Heart left ventricle (tissue), 16 donors: ENCODE measurements at regions of chr6 and their contacts with region 1.

Region 1: DNA sequence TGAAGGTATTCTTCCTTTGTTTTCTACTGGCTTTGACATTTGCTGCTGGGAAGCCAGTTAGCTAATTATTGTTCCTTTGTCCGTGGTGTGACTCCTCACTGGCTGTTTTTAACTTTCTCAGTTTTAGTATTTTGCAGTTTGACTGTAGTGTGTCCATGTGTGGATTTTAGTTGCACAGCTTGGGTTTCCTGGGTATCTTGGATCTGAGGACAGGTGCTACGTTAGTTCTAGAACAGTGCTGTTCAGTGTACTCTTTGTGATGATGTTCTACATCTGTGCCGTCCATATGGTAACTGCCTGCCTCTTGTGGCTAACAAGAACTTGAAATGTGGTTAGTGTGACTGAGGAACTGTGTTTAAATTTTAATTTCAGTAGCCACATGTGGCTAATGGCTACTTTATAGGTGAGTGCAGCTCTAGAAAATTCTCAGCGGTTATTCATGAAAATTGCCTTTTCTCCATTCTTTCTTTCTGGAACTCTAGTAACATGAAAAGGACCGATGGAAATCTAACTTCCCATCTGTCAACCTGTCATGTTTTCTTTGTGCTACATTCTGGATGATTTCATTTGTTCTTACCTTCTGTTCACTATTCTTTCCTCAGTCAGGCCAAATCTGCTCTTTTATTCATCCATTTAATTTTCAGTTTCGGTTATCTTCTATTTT is 7.4 kb downstream of the SNX9 start:
- DNase-seq: no peak
- ATAC-seq: no peak
- H3K4me3 ChIP-seq: no peak overlapping the region
- H3K27ac ChIP-seq: no peak overlapping the region
- H3K4me1 ChIP-seq: peaks cover 0 to 72% (median 40%) of the 10 kb centered on the region in 12 donors
- H3K27me3 ChIP-seq: no peaks in the 10 kb centered on the region
- CTCF ChIP-seq: no peak
- POLR2A ChIP-seq: no peak

Region 2: DNA sequence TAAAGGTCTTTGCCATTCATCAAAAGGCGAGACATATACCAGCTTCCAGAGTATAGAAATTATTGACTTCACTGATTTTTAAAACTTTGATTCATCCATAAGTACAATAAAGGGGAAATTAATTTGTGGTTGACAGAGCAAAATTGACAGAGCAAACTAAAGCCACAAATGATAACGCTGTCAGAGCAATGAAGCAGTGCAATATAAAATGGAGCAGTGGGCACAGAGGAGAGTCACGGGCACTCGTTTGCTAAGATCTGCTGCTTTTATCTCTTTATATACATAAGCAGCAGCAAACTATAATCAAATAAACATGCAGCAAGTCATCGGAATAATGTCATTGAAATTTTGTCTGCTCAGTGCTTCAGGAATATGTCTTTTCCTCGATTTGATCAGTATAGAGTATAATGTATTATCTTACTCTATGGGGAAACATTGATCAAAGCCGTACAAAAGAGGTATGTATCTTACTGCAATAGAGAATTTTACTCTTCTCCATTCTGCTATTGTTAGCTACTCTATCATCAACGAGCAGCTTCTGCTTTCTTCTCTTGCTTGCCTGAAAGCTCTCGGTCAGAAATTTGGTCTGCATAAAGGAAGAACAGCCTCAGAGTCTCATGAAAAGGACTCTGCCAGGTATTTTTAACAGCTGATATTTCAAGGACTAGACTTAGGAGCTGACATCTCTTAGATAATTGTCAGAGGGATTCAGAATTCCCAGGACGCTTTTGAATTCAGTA is 1599.3 kb before region 1 on chr6:
- intact Hi-C with region 1: no loop called
- DNase-seq: no peak
- ATAC-seq: no peak
- H3K4me3 ChIP-seq: no peak overlapping the region
- H3K27ac ChIP-seq: no peak overlapping the region
- H3K4me1 ChIP-seq: no peaks in the 10 kb centered on the region
- H3K27me3 ChIP-seq: no peaks in the 10 kb centered on the region
- CTCF ChIP-seq: no peak
- POLR2A ChIP-seq: no peak

Region 3: GRCh38 chr6:157203312-157203744 is 627.2 kb before region 1 on chr6:
- intact Hi-C with region 1: no loop called
- DNase-seq: no peak
- ATAC-seq: no peak
- H3K4me3 ChIP-seq: no peak overlapping the region
- H3K27ac ChIP-seq: no peak overlapping the region
- H3K4me1 ChIP-seq: peaks cover 0 to 10% (median 5%) of the 10 kb centered on the region in 12 donors
- H3K27me3 ChIP-seq: no peaks in the 10 kb centered on the region
- CTCF ChIP-seq: no peak
- POLR2A ChIP-seq: no peak

Region 4: DNA sequence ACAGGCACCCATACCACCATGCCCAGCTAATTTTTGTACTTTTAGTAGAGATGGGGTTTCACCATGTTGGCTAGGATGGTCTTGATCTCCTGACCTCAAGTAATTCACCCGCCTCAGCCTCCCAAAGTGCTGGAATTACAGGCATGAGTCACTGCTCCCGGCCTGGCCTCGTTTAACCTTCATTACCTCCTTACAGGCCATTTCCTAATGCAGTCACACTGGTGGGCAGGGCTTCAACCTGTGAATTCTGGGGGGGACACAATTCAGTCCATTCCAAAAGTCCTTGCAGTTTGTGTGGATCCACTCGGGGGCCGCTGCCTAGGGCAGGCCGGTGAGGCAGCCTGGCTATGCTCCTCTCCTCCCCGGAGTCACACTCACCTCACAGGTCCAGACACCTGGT is 119.9 kb before region 1 on chr6:
- intact Hi-C with region 1: no loop called
- DNase-seq: no peak
- ATAC-seq: no peak
- H3K4me3 ChIP-seq: no peak overlapping the region
- H3K27ac ChIP-seq: no peak overlapping the region
- H3K4me1 ChIP-seq: peaks cover 0 to 25% (median 13%) of the 10 kb centered on the region in 12 donors
- H3K27me3 ChIP-seq: no peaks in the 10 kb centered on the region
- CTCF ChIP-seq: no peak
- POLR2A ChIP-seq: no peak

Region 5: DNA sequence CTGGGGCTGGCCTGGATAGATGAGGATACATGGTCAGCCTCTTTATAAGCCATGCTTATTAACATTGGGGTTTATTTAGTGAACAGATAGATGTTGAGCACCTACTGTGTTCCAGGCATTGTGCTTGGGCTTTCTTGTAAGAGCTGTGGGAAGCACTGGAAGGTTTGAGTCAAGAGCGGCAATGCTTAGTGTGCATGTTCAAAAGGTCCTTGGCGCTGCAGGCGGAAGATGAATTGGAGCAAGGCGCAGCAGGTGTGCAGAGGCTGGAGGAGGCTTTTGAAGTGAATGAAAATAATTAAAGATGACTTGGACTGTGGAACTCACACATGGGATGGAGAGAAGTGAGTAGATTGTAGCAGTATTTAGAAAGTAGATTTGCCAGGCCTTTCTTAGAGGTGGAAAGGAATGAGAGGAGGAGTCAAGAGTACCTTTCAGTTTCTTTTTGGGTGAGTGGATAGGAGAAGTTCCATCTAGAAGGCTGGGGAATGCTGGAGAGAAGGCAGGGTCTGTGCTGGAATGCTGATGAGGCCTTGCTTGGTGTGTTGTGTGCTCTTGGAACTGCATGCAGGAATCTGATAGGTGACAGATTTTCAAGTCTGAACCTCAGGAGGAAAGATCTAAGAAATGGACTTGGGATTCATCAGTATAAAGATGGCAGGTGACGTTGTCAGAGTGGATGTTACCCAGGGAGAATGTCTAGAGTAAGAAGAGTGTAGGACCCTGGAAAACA is 19.0 kb after region 1 on chr6:
- intact Hi-C with region 1: no loop called
- DNase-seq: no peak
- ATAC-seq: no peak
- H3K4me3 ChIP-seq: no peak overlapping the region
- H3K27ac ChIP-seq: no peak overlapping the region
- H3K4me1 ChIP-seq: peaks cover 0 to 57% (median 28%) of the 10 kb centered on the region in 12 donors
- H3K27me3 ChIP-seq: no peaks in the 10 kb centered on the region
- CTCF ChIP-seq: no peak
- POLR2A ChIP-seq: no peak

Region 6: DNA sequence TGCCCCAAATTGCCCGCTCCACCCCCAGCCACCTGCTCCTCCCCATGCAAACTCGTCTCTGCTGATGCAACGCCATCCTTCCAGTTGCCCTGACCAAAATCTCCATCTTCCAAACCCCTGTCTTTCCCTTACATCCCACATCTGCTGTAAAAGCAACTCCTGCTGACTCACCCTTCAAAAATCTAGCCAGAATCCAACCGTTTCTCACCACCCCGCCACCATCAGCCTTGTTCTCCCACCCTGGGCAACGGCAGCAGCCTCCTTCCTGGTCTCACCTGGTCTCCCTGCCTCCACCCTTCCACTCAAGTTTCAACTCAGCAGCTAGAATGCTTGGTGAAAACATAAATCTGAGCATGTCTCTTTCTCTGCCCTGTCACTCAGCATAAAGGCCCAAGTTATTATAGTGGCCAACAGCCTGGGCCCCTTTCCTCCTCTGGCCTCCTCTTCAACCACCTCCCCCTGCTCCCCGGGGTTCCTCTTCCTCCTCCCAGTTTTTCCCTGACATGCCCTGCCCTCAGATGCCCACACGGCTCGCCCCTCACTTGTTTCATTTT is 143.9 kb after region 1 on chr6:
- intact Hi-C with region 1: loop called in 1 of 10 experiments (anchors 10 kb)
- DNase-seq: no peak
- ATAC-seq: no peak
- H3K4me3 ChIP-seq: no peak overlapping the region
- H3K27ac ChIP-seq: no peak overlapping the region
- H3K4me1 ChIP-seq: no peaks in the 10 kb centered on the region
- H3K27me3 ChIP-seq: no peaks in the 10 kb centered on the region
- CTCF ChIP-seq: no peak
- POLR2A ChIP-seq: no peak